GM12878 (cell line): ENCODE measurements at regions of chr2 and their contacts with region 1.

Region 1: GRCh38 chr2:11863513-11864328 is 117.3 kb downstream of the LPIN1 start:
- DNase-seq: no peak
- ATAC-seq: peak; percentile 45
- H3K4me3 ChIP-seq: peak overlapping the region; percentile 35; the same call in 1 of the 2 replicates
- H3K27ac ChIP-seq: peak overlapping the region; percentile 85
- H3K4me1 ChIP-seq: peaks cover 65% of the 10 kb centered on the region
- H3K27me3 ChIP-seq: no peaks in the 10 kb centered on the region
- CTCF ChIP-seq: peak; percentile 93 to 97 (median 94)
- EP300 ChIP-seq: no peak
- POLR2A ChIP-seq: no peak
- RAD21 ChIP-seq: peak; percentile 81

Region 2: GRCh38 chr2:11498543-11499080 is 365.1 kb before region 1 on chr2:
- CTCF ChIA-PET with region 1: no interaction called
- POLR2A ChIA-PET with region 1: no interaction called
- RAD21 ChIA-PET with region 1: no interaction called
- SMC1A ChIA-PET with region 1: no interaction called
- in situ Hi-C with region 1: no loop called
- intact Hi-C with region 1: no loop called
- DNase-seq: peak; percentile 69
- ATAC-seq: peak; percentile 97
- H3K4me3 ChIP-seq: peak overlapping the region; percentile 48; the same call in 1 of the 2 replicates
- H3K27ac ChIP-seq: no peak overlapping the region
- H3K4me1 ChIP-seq: peaks cover 31% of the 10 kb centered on the region
- H3K27me3 ChIP-seq: no peaks in the 10 kb centered on the region
- CTCF ChIP-seq: 0 out of 6 replicates have a peak, but pooled peaks of 1 of the 3 experiments have one; percentile 16
- EP300 ChIP-seq: peak; percentile 54 to 78; a peak in 3 of 4 replicates
- POLR2A ChIP-seq: no peak
- RAD21 ChIP-seq: no peak

Region 3: GRCh38 chr2:11829947-11830707 is 33.6 kb before region 1 on chr2:
- CTCF ChIA-PET with region 1: interaction called, 26 read pairs
- POLR2A ChIA-PET with region 1: interaction called, 3 read pairs
- RAD21 ChIA-PET with region 1: interaction called, 22 read pairs
- SMC1A ChIA-PET with region 1: interaction called, 32 read pairs
- in situ Hi-C with region 1: no loop called
- intact Hi-C with region 1: loop called (anchors 1 kb)
- DNase-seq: peak; percentile 96
- ATAC-seq: peak; percentile 84
- H3K4me3 ChIP-seq: peak overlapping the region; percentile 38; the same call in 1 of the 2 replicates
- H3K27ac ChIP-seq: peak overlapping the region; percentile 78
- H3K4me1 ChIP-seq: peaks cover 27% of the 10 kb centered on the region
- H3K27me3 ChIP-seq: 0 out of 4 replicates have a peak, but pooled peaks cover 0 to 2% of the 10 kb centered on the region in 2 experiments
- CTCF ChIP-seq: peak in 2 of 3 experiments; percentile 7 to 58; a peak in 3 of 6 replicates
- EP300 ChIP-seq: peak; percentile 88 to 97; a peak in 3 of 4 replicates
- POLR2A ChIP-seq: no peak
- RAD21 ChIP-seq: peak; percentile 54

Region 4: GRCh38 chr2:11945139-11946126 is 81.7 kb after region 1 on chr2:
- CTCF ChIA-PET with region 1: interaction called, 3 read pairs
- POLR2A ChIA-PET with region 1: interaction called, 6 read pairs
- RAD21 ChIA-PET with region 1: interaction called, 7 read pairs
- SMC1A ChIA-PET with region 1: interaction called, 10 read pairs
- in situ Hi-C with region 1: no loop called
- intact Hi-C with region 1: loop called (anchors 1 kb)
- DNase-seq: peak; percentile 50
- ATAC-seq: peak; percentile 90
- H3K4me3 ChIP-seq: no peak overlapping the region
- H3K27ac ChIP-seq: peak overlapping the region; percentile 48; the same call in 1 of the 2 replicates
- H3K4me1 ChIP-seq: peaks cover 13% of the 10 kb centered on the region
- H3K27me3 ChIP-seq: no peaks in the 10 kb centered on the region
- CTCF ChIP-seq: no peak
- EP300 ChIP-seq: no peak
- POLR2A ChIP-seq: no peak
- RAD21 ChIP-seq: no peak

Region 5: DNA sequence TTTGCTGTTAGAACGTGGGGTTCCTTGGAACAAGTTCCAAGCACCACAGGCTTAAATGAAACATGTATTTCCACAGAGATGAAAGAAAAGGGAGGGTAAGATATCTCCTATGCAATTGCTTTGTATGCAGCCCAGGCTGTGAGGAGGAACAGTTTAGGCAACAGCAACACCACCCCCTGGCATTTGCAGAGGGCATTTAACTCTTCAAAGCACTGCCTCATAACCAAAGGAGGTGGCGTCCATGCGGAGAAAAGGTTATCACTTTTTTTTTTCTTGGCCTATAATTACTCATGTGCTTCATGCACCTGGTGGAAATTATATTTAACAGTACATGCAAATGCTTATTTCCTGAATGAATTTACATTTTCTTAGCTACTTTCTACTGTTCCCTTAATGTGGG is 168.7 kb after region 1 on chr2:
- CTCF ChIA-PET with region 1: interaction called, 24 read pairs
- POLR2A ChIA-PET with region 1: no interaction called
- RAD21 ChIA-PET with region 1: interaction called, 79 read pairs
- SMC1A ChIA-PET with region 1: interaction called, 90 read pairs
- in situ Hi-C with region 1: no loop called
- intact Hi-C with region 1: loop called (anchors 1 kb)
- DNase-seq: peak; percentile 71
- ATAC-seq: peak; percentile 91
- H3K4me3 ChIP-seq: no peak overlapping the region
- H3K27ac ChIP-seq: 0 out of 2 replicates have a peak overlapping the region, but pooled peaks have one; percentile 1
- H3K4me1 ChIP-seq: peaks cover 44% of the 10 kb centered on the region
- H3K27me3 ChIP-seq: no peaks in the 10 kb centered on the region
- CTCF ChIP-seq: peak; percentile 36 to 45 (median 45); a peak in 4 of 6 replicates
- EP300 ChIP-seq: 0 out of 4 replicates have a peak, but pooled peaks of 1 of the 2 experiments have one; percentile 9
- POLR2A ChIP-seq: no peak
- RAD21 ChIP-seq: peak; percentile 65

Region 6: GRCh38 chr2:12116228-12116750 is 252.6 kb after region 1 on chr2:
- CTCF ChIA-PET with region 1: interaction called, 4 read pairs
- POLR2A ChIA-PET with region 1: interaction called, 4 read pairs
- RAD21 ChIA-PET with region 1: interaction called, 5 read pairs
- SMC1A ChIA-PET with region 1: interaction called, 14 read pairs
- in situ Hi-C with region 1: no loop called
- intact Hi-C with region 1: loop called (anchors 5 kb)
- DNase-seq: peak; percentile 51
- ATAC-seq: peak; percentile 92
- H3K4me3 ChIP-seq: no peak overlapping the region
- H3K27ac ChIP-seq: no peak overlapping the region
- H3K4me1 ChIP-seq: peaks cover 13% of the 10 kb centered on the region
- H3K27me3 ChIP-seq: no peaks in the 10 kb centered on the region
- CTCF ChIP-seq: 0 out of 6 replicates have a peak, but pooled peaks of 1 of the 3 experiments have one; percentile 6
- EP300 ChIP-seq: peak; percentile 56 to 65; a peak in 2 of 4 replicates
- POLR2A ChIP-seq: no peak
- RAD21 ChIP-seq: no peak

Region 7: GRCh38 chr2:12416600-12416999 is 552.9 kb after region 1 on chr2:
- CTCF ChIA-PET with region 1: no interaction called
- POLR2A ChIA-PET with region 1: no interaction called
- RAD21 ChIA-PET with region 1: interaction called, 3 read pairs
- SMC1A ChIA-PET with region 1: no interaction called
- in situ Hi-C with region 1: no loop called
- intact Hi-C with region 1: loop called (anchors 10 kb)
- DNase-seq: no peak
- ATAC-seq: peak; percentile 14; the same call in 2 of the 3 replicates
- H3K4me3 ChIP-seq: no peak overlapping the region
- H3K27ac ChIP-seq: no peak overlapping the region
- H3K4me1 ChIP-seq: peaks cover 13% of the 10 kb centered on the region; the same call in 1 of the 2 replicates
- H3K27me3 ChIP-seq: no peaks in the 10 kb centered on the region
- CTCF ChIP-seq: peak; percentile 17 to 30 (median 25); a peak in 4 of 6 replicates
- EP300 ChIP-seq: no peak
- POLR2A ChIP-seq: no peak
- RAD21 ChIP-seq: peak; percentile 50

Region 8: GRCh38 chr2:12931186-12931844 is 1067.6 kb after region 1 on chr2:
- CTCF ChIA-PET with region 1: interaction called, 4 read pairs
- POLR2A ChIA-PET with region 1: no interaction called
- RAD21 ChIA-PET with region 1: interaction called, 6 read pairs
- SMC1A ChIA-PET with region 1: interaction called, 13 read pairs
- in situ Hi-C with region 1: no loop called
- intact Hi-C with region 1: no loop called
- DNase-seq: no peak
- ATAC-seq: peak; percentile 81
- H3K4me3 ChIP-seq: no peak overlapping the region
- H3K27ac ChIP-seq: no peak overlapping the region
- H3K4me1 ChIP-seq: no peaks in the 10 kb centered on the region
- H3K27me3 ChIP-seq: no peaks in the 10 kb centered on the region; a peak in 1 of 4 replicates
- CTCF ChIP-seq: peak; percentile 68 to 77 (median 75)
- EP300 ChIP-seq: no peak
- POLR2A ChIP-seq: no peak
- RAD21 ChIP-seq: peak; percentile 59